PC-9 (cell line): ENCODE measurements at regions of chr9 and their contacts with region 1.

Region 1: GRCh38 chr9:14532716-14533115 is 160.5 kb downstream of the ZDHHC21 start:
- DNase-seq: no peak
- H3K4me3 ChIP-seq: no peak overlapping the region
- H3K27ac ChIP-seq: no peak overlapping the region
- H3K4me1 ChIP-seq: no peaks in the 10 kb centered on the region
- H3K27me3 ChIP-seq: no peaks in the 10 kb centered on the region
- CTCF ChIP-seq: no peak

Region 2: DNA sequence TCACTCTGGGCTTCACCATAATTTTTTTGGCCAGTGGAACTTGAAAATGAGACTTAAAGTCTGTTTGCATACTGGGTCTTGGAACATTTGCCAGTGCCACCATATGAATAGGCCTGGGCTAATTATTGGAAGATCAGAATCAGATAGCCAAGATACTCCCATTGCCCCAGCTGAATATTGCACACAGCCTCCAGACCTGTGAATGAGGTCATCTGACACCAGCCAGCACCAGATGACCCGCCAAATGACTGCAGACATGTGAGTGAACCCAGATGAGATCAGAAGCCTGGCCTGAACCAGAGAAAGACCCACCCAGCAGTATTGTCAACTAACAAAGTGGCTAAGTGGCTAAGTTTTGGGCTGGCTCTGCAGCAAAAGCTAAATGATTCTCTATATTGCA is 1032.7 kb before region 1 on chr9:
- CTCF ChIA-PET with region 1: no interaction called
- POLR2A ChIA-PET with region 1: no interaction called
- intact Hi-C with region 1: no loop called
- DNase-seq: no peak
- H3K4me3 ChIP-seq: no peak overlapping the region
- H3K27ac ChIP-seq: no peak overlapping the region
- H3K4me1 ChIP-seq: no peaks in the 10 kb centered on the region
- H3K27me3 ChIP-seq: no peaks in the 10 kb centered on the region
- CTCF ChIP-seq: no peak

Region 3: DNA sequence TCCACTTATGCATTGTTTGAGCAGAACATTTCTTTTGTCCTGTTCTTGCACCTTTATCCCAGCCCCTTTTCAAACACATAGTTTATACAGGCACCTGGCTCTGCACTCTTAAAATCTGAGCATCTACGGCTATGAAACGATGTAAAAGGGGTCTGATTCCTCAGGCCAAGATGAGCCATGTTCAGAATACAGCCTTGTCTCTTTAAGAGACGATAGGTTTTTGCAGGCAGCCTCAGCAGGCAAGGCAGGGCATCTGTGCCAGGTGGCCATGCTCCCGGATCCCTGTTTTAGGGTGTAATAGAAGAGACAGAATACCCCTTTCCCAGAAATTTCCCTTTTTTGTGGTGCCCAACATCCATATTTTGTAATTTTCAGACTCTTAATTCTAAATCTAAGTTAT is 129.6 kb before region 1 on chr9:
- CTCF ChIA-PET with region 1: interaction called, 12 read pairs
- POLR2A ChIA-PET with region 1: no interaction called
- intact Hi-C with region 1: no loop called
- DNase-seq: no peak
- H3K4me3 ChIP-seq: no peak overlapping the region
- H3K27ac ChIP-seq: no peak overlapping the region
- H3K4me1 ChIP-seq: no peaks in the 10 kb centered on the region
- H3K27me3 ChIP-seq: no peaks in the 10 kb centered on the region
- CTCF ChIP-seq: no peak

Region 4: GRCh38 chr9:14627513-14627912 is 94.8 kb after region 1 on chr9:
- CTCF ChIA-PET with region 1: no interaction called
- POLR2A ChIA-PET with region 1: interaction called, 11 read pairs
- intact Hi-C with region 1: no loop called
- DNase-seq: no peak
- H3K4me3 ChIP-seq: no peak overlapping the region
- H3K27ac ChIP-seq: no peak overlapping the region
- H3K4me1 ChIP-seq: no peaks in the 10 kb centered on the region
- H3K27me3 ChIP-seq: no peaks in the 10 kb centered on the region
- CTCF ChIP-seq: no peak